ENCODE measurements at regions of chr14 and their contacts with region 1.

Region 1: DNA sequence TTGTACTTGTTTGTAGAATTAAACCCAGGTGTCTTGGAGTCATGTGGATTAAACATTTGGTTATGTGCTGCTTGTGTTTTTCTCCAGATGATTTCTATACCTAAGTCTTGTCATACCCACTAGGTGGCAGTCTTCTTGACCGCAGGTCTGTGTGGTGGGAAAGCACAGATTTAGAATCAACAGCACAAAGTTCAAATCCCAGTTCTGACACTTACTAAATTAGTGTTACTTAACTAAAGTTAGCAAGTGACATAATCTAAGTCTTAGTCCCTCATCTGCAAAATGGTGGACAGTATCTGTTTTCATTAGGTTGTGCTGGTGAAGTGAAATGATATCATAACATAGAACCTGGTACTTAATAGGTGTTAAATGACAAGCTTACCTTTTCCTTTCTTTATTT is 151.0 kb upstream of the ARHGAP5 start:
- DNase-seq: peak in 1 of 2 donors; percentile 67
- ATAC-seq: no peak
- H3K4me3 ChIP-seq: no peak overlapping the region
- H3K4me3 Mint-ChIP-seq: no peak overlapping the region
- H3K27ac ChIP-seq: no peak overlapping the region
- H3K27ac Mint-ChIP-seq: no peak overlapping the region
- H3K4me1 ChIP-seq: no peaks in the 10 kb centered on the region
- H3K4me1 Mint-ChIP-seq: peaks cover 0 to 5% of the 10 kb centered on the region in 2 donors
- H3K27me3 ChIP-seq: no peaks in the 10 kb centered on the region
- H3K27me3 Mint-ChIP-seq: no peaks in the 10 kb centered on the region
- CTCF ChIP-seq: peak; percentile 42

Region 2: GRCh38 chr14:32252030-32252670 is 326.0 kb after region 1 on chr14:
- intact Hi-C with region 1: loop called (anchors 2 kb)
- DNase-seq: peak in 1 of 2 donors; percentile 80
- ATAC-seq: peak; percentile 77 to 94 (median 82)
- H3K4me3 ChIP-seq: no peak overlapping the region
- H3K4me3 Mint-ChIP-seq: no peak overlapping the region
- H3K27ac ChIP-seq: no peak overlapping the region
- H3K27ac Mint-ChIP-seq: no peak overlapping the region
- H3K4me1 ChIP-seq: no peaks in the 10 kb centered on the region
- H3K4me1 Mint-ChIP-seq: no peaks in the 10 kb centered on the region
- H3K27me3 ChIP-seq: no peaks in the 10 kb centered on the region
- H3K27me3 Mint-ChIP-seq: no peaks in the 10 kb centered on the region
- CTCF ChIP-seq: peak; percentile 70

Region 3: GRCh38 chr14:32560209-32560857 is 634.2 kb after region 1 on chr14:
- intact Hi-C with region 1: loop called (anchors 2 kb)
- DNase-seq: peak in 1 of 2 donors; percentile 53
- ATAC-seq: peak in 2 of 3 donors; percentile 47 to 60
- H3K4me3 ChIP-seq: no peak overlapping the region
- H3K4me3 Mint-ChIP-seq: no peak overlapping the region
- H3K27ac ChIP-seq: no peak overlapping the region
- H3K27ac Mint-ChIP-seq: no peak overlapping the region
- H3K4me1 ChIP-seq: no peaks in the 10 kb centered on the region
- H3K4me1 Mint-ChIP-seq: peaks cover 13 to 18% of the 10 kb centered on the region in 2 donors
- H3K27me3 ChIP-seq: no peaks in the 10 kb centered on the region
- H3K27me3 Mint-ChIP-seq: peaks cover 0 to 3% of the 10 kb centered on the region in 2 donors
- CTCF ChIP-seq: peak; percentile 37